ENCODE measurements at regions of chr1 and their contacts with region 1.

Region 1: GRCh38 chr1:231421993-231422764 is at the start of gene EGLN1:
- DNase-seq: peak; percentile 85
- ATAC-seq: peak; percentile 85
- H3K4me3 Mint-ChIP-seq: peak within 1 kb of the TSS; percentile 91
- H3K27ac Mint-ChIP-seq: peak within 1 kb of the TSS; percentile 89
- H3K4me1 Mint-ChIP-seq: peaks cover 35% of the 10 kb centered on the region
- H3K27me3 Mint-ChIP-seq: peaks cover 14% of the 10 kb centered on the region
- total RNA-seq, gene EGLN1: 30.5 to 32.6 TPM

Region 2: GRCh38 chr1:231108516-231109302 is 313.5 kb before region 1 on chr1:
- CTCF ChIA-PET with region 1: no interaction called
- POLR2A ChIA-PET with region 1: no interaction called
- DNase-seq: no peak
- ATAC-seq: no peak
- H3K4me3 Mint-ChIP-seq: no peak overlapping the region
- H3K27ac Mint-ChIP-seq: no peak overlapping the region
- H3K4me1 Mint-ChIP-seq: peaks cover 12% of the 10 kb centered on the region
- H3K27me3 Mint-ChIP-seq: peaks cover 13% of the 10 kb centered on the region

Region 3: DNA sequence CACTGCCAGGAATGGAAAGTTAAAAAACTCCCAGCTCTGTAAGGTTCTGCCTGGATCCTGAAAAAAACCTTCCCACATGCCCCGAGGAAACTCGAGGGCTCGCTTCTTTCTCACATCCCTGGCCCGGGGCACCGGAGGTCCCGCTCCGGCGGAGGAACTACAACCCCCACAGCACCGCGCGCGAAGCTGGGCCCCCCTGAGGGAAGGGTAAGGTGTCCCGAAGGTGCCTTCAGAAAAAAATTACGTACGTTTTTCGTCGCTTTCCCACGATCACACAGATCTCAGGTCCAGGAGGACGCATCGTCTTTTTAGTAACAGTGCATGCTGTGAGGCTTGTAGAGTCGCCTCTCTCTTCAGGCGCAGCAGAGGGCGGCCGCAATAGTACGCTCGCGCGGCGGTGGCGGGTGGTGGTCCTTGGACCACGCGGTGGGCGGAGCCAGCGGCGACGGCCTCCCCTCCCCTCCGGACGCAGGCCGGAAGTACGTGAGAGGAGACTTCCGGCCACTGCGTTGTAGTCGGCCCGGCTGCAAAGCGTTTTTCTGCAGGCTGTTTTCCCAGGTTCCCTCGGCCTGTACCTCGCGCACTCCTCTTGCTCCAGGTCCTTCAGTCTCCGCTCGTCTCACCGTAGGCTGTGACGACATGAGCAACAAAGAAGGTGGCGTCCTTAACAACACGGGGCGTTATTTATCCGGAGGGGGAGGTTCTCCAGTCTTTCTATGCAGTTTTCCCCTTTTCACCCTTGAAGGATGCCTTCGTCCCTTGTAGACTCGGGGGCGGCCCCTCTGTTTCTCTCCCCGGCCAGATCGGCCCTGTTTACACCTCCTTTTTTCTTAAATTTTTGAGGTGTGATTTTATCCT is 106.2 kb after region 1 on chr1 and contains the start of gene TSNAX:
- CTCF ChIA-PET with region 1: interaction called, 9 read pairs
- POLR2A ChIA-PET with region 1: interaction called, 10 read pairs
- DNase-seq: peak; percentile 92
- ATAC-seq: peak; percentile 93
- H3K4me3 Mint-ChIP-seq: peak within 1 kb of the TSS; percentile 97
- H3K27ac Mint-ChIP-seq: peak within 1 kb of the TSS; percentile 100
- H3K4me1 Mint-ChIP-seq: peaks cover 33% of the 10 kb centered on the region
- H3K27me3 Mint-ChIP-seq: no peaks in the 10 kb centered on the region
- total RNA-seq, gene TSNAX: 37.2 to 42.7 TPM

Measured in activated CD8-positive, alpha-beta T cell treated with anti-CD3 and anti-CD28 coated beads, Interleukin-2, amount 10 ng/mL, durations not matched to agents 7 days and 5 days (primary cell).